PC-3 (cell line): ENCODE measurements at regions of chr3 and their contacts with region 1.

Region 1: DNA sequence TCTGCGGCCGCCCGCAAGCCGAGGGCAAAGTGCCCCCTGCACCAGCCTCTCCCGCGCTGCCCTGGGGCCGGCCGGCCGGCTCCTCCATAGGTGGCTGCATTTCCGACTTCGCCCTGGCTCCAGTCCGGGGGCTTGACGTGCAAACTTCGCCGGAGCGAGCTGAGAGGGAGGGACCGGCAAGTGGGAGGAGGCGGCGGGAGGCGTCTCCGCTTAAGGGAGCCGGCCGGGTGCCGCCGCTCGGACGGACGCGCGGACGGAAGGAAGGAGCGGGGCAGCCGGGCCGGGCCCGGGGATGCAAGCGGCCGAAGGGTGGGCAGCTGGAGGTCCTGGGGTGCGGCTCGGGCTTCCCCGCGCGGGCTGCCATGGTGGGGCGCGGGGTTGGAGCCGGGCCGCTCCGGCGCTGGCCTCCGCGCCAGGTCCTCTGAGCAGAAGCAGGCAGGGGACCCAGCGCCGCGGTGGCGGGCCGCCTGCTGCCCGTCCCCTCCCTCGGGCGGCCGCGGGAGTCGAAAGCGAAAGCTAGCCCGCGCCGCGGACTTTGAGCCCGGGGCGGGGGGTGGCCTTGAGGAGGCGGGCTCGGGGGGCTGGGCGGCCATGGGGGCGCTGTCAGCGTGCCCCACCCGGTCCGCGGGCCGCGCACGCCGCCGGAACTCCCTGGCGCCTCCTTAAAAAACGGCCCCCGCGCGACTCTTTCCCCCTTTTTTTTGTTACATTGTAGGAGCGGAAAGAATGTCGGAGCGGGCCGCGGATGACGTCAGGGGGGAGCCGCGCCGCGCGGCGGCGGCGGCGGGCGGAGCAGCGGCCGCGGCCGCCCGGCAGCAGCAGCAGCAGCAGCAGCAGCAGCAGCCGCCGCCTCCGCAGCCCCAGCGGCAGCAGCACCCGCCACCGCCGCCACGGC is at the start of gene SCAANT1:
- DNase-seq: peak; percentile 68
- ATAC-seq: peak; percentile 75
- H3K4me3 ChIP-seq: peak within 1 kb of the TSS; percentile 76
- H3K27ac ChIP-seq: peak within 1 kb of the TSS; percentile 78
- H3K4me1 ChIP-seq: peaks cover 22% of the 10 kb centered on the region
- H3K27me3 ChIP-seq: no peaks in the 10 kb centered on the region
- CTCF ChIP-seq: no peak
- total RNA-seq, gene SCAANT1: not detected in 2 replicates

Region 2: DNA sequence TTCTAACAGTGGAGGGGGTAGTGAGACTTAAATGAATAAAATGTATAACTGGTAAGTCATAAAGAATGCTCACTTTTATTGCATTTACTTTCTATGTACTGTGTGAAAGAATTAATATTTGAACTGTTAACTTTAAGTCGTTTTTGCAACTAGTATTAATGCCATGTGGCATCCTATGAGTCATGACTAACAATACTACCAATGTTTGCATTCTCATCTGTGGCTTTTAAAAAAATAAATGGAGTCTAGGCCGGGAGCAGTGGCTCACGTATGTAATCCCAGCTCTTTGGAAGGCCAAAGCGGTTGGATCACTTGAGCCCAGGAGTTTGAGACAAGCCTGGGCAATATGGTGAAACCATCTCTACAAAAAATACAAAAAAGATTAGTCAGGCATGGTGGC is 87.8 kb before region 1 on chr3:
- CTCF ChIA-PET with region 1: no interaction called
- POLR2A ChIA-PET with region 1: interaction called, 3 read pairs
- intact Hi-C with region 1: loop called (anchors 5 kb)
- DNase-seq: peak; percentile 66
- ATAC-seq: peak; percentile 97
- H3K4me3 ChIP-seq: no peak overlapping the region
- H3K27ac ChIP-seq: peak overlapping the region; percentile 76
- H3K4me1 ChIP-seq: peaks cover 9% of the 10 kb centered on the region
- H3K27me3 ChIP-seq: no peaks in the 10 kb centered on the region
- CTCF ChIP-seq: no peak

Region 3: GRCh38 chr3:63845215-63845614 is 66.9 kb before region 1 on chr3:
- CTCF ChIA-PET with region 1: no interaction called
- POLR2A ChIA-PET with region 1: no interaction called
- intact Hi-C with region 1: no loop called
- DNase-seq: no peak
- ATAC-seq: no peak
- H3K4me3 ChIP-seq: no peak overlapping the region
- H3K27ac ChIP-seq: no peak overlapping the region
- H3K4me1 ChIP-seq: no peaks in the 10 kb centered on the region
- H3K27me3 ChIP-seq: no peaks in the 10 kb centered on the region
- CTCF ChIP-seq: no peak

Region 4: DNA sequence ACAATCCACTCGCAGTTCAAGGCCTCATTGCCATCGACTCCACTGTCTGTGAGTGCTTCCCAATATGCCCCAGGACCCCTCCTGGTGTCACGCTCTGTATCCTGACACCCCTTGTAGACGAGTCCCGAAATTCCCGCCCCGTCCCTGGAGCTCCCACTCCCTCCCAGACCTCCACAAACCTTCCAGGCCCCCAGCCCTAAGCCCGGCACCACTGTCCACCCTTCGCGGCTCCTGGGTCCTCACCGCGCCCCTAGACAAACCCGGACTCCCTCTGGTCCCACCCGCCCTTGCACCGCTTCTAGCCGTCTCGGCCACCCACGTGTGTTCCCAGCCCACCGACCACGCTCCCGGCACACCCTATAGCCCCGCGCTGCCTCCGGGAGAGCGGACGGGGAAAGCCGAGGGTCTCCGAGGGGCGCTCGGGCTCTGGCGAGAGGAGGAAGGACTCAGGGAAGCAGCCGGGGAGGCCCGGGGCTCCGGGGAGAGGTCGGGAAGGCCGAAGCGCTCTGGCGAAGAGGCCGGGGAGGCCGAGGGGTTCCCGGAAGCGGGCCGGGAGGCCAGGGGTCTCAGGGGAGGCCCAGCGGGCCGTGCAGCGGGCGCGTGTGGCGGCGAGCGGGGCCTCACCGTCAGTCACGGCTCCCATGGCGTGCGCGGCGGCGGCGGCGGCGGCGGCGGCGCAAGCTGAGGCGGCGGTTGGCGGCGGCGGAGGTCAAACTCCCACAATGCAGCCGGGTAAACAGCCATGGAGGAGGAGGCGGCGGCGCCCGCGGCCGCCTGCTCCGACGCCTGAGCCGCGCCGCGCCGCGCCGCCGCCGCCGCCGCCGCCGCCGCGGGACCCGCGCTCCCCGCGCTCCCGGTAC is 48.7 kb before region 1 on chr3 and contains the starts of genes ATXN7 and THOC7:
- CTCF ChIA-PET with region 1: no interaction called
- POLR2A ChIA-PET with region 1: no interaction called
- intact Hi-C with region 1: loop called (anchors 5 kb)
- DNase-seq: peak; percentile 26
- ATAC-seq: peak; percentile 80
- H3K4me3 ChIP-seq: peak within 1 kb of the TSS; percentile 76
- H3K27ac ChIP-seq: peak within 1 kb of the TSS; percentile 56
- H3K4me1 ChIP-seq: 0 out of 2 replicates have a peak, but pooled peaks cover 5% of the 10 kb centered on the region
- H3K27me3 ChIP-seq: no peaks in the 10 kb centered on the region
- CTCF ChIP-seq: no peak
- total RNA-seq, gene ATXN7: 3.6 and 6.3 TPM in 2 replicates
- total RNA-seq, gene THOC7: 26.7 and 41.8 TPM in 2 replicates

Region 5: GRCh38 chr3:63961891-63962290 is 49.8 kb after region 1 on chr3:
- CTCF ChIA-PET with region 1: no interaction called
- POLR2A ChIA-PET with region 1: no interaction called
- intact Hi-C with region 1: loop called (anchors 10 kb)
- DNase-seq: peak; percentile 54
- ATAC-seq: peak; percentile 63
- H3K4me3 ChIP-seq: no peak overlapping the region
- H3K27ac ChIP-seq: no peak overlapping the region
- H3K4me1 ChIP-seq: peaks cover 4% of the 10 kb centered on the region; the same call in 1 of the 2 replicates
- H3K27me3 ChIP-seq: no peaks in the 10 kb centered on the region
- CTCF ChIP-seq: peak; percentile 48; the same call in 1 of the 2 replicates